ENCODE measurements at regions of chr11 and their contacts with region 1.

Region 1: GRCh38 chr11:6667733-6668374 is 12.2 kb upstream of the DCHS1 start:
- DNase-seq: peak; percentile 59
- H3K4me3 Mint-ChIP-seq: no peak overlapping the region
- H3K27ac Mint-ChIP-seq: peak overlapping the region; percentile 28
- H3K4me1 Mint-ChIP-seq: peaks cover 63% of the 10 kb centered on the region
- H3K27me3 Mint-ChIP-seq: no peaks in the 10 kb centered on the region

Region 2: DNA sequence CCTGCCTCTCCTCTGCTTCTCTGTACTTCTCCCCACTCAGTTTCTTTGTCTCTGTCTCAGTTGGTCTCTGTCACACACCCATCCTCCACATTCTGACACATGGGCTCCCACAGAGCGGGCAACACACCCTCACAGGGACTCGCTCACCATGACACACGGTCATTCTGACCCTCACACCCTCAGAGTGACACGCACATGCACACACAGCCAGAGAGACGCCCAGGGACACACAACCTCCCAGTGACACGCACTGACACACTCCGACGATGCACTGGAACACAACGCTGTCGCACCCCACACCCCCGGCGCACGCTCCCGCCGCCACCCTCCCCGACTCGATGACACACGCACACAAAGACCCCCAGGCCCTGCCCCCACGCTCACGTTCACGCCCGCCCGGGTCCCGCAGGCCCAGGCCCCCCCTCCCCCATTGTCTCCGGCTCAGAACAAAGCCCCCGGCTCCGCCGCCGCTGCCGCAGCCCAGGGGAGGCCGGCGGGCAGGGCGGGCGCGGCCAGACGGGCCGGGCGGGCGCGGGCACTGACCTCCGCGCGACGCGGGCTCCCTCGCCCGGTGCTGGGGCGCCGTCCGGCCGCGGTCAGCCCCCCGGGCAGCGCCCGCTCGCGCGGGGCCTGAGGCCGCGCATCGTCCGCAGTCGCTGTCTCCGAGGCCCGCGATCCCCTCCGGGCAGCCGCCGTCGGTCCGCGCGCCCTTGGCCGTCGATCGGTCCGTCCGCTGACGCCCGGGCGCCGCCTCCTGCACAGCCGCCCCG is 12.6 kb before region 1 on chr11:
- CTCF ChIA-PET with region 1: interaction called, 8 read pairs
- intact Hi-C with region 1: loop called (anchors 2 kb)
- DNase-seq: peak; percentile 46
- H3K4me3 Mint-ChIP-seq: no peak overlapping the region
- H3K27ac Mint-ChIP-seq: no peak overlapping the region
- H3K4me1 Mint-ChIP-seq: peaks cover 3% of the 10 kb centered on the region
- H3K27me3 Mint-ChIP-seq: no peaks in the 10 kb centered on the region

Region 3: DNA sequence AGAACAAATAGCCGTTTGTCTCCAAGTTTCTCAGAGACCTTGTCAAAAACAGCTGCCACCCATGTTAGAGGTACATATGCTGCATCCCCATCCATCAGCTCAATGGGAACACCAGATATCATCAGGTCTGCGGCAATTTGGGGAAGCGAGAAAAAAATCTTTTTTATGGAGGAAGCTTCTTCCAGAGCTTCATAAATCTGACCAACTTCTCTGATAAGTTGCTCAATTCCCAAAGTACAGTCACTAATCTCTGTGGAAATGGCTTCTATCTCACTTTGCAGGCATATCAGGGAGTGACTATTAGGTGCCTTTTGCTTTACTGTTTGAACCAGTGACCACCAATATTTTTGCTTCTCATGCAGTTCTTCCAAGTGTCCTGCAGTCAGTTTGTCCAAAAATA is 49.6 kb after region 1 on chr11:
- CTCF ChIA-PET with region 1: no interaction called
- intact Hi-C with region 1: no loop called
- DNase-seq: no peak
- H3K4me3 Mint-ChIP-seq: no peak overlapping the region
- H3K27ac Mint-ChIP-seq: no peak overlapping the region
- H3K4me1 Mint-ChIP-seq: peaks cover 50% of the 10 kb centered on the region
- H3K27me3 Mint-ChIP-seq: no peaks in the 10 kb centered on the region

Region 4: DNA sequence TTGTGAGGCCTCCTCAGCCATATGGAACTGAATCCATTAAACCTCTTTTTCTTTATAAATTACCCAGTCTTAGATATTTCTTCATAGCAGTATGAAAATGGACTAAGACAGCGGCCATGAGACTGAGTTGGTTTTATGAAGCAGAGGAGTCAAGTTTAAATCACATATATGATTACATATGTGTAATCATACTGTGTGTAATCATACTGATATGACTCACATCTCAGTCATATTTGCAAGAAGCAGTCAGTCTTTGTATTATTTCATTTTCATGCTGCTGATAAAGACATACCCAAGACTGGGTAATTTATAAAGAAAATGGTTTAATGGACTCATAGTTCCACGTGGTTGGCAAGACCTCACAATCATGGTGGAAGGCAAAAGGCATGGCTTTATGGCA is 673.7 kb after region 1 on chr11:
- CTCF ChIA-PET with region 1: no interaction called
- intact Hi-C with region 1: no loop called
- DNase-seq: no peak
- H3K4me3 Mint-ChIP-seq: no peak overlapping the region
- H3K27ac Mint-ChIP-seq: no peak overlapping the region
- H3K4me1 Mint-ChIP-seq: no peaks in the 10 kb centered on the region
- H3K27me3 Mint-ChIP-seq: peaks cover 17% of the 10 kb centered on the region